Common myeloid progenitor, CD34-positive (primary cell): ENCODE measurements at regions of chr1 and their contacts with region 1.

Region 1: GRCh38 chr1:27719286-27720251 is 6.2 kb upstream of the FAM76A start:
- DNase-seq: peak; percentile 20 to 44 (median 36)
- H3K4me3 ChIP-seq: no peak overlapping the region
- H3K27ac ChIP-seq: no peak overlapping the region
- H3K4me1 ChIP-seq: no peaks in the 10 kb centered on the region
- H3K27me3 ChIP-seq: peaks cover 0 to 1% (median 0%) of the 10 kb centered on the region in 5 experiments

Region 2: GRCh38 chr1:27616441-27616840 is 103.1 kb before region 1 on chr1:
- CTCF ChIA-PET with region 1: no interaction called
- POLR2A ChIA-PET with region 1: no interaction called
- DNase-seq: peak in 1 of 3 donors; percentile 42
- H3K4me3 ChIP-seq: no peak overlapping the region
- H3K27ac ChIP-seq: no peak overlapping the region
- H3K4me1 ChIP-seq: peaks cover 5 to 46% (median 28%) of the 10 kb centered on the region in 4 experiments
- H3K27me3 ChIP-seq: no peaks in the 10 kb centered on the region

Region 3: DNA sequence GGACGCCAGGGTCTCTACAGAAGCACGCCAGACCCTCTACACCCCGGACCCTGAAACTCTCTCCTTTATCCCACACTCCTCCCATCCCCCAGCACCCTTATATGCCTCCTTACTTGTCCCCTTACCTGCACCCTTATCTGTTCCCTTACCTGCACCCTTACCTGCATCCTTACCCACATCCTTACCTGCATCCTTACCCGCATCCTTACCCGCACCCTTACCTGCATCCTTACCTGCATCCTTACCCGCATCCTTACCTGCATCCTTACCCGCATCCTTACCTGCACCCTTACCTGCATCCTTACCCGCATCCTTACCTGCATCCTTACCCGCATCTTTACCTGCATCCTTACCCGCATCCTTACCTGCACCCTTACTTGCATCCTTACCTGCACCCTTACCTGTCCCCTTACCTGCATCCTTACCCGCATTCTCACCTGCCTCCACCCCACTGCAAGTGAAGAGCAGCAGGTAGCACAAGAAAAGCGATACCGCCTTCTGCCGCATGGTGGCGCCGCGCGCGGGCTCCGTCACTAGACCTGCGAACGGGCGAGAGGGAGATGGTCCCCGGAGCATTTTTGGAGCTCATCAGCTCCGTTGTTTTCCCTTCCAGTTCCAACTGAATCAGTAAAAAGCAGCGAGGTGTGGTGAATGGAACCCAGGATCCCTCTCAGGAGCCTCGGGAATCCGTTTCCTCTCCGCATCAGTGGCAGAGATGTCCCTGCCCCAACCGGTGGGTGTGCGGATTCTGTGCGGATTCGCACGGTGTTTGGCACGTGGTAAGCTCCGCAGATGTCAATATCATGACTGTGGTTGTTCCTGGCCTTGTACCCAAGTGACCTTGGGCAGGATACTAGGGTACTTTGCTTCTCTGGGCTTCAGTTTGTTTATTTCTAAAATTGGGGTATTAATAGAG is 50.5 kb before region 1 on chr1:
- CTCF ChIA-PET with region 1: interaction called, 15 read pairs
- POLR2A ChIA-PET with region 1: no interaction called
- DNase-seq: peak; percentile 59 to 79 (median 77)
- H3K4me3 ChIP-seq: peak overlapping the region in 6 of 7 experiments; percentile 28 to 74 (median 58)
- H3K27ac ChIP-seq: no peak overlapping the region
- H3K4me1 ChIP-seq: peaks cover 7 to 35% (median 19%) of the 10 kb centered on the region in 4 experiments
- H3K27me3 ChIP-seq: no peaks in the 10 kb centered on the region

Region 4: GRCh38 chr1:27689423-27690173 is 30.0 kb before region 1 on chr1:
- CTCF ChIA-PET with region 1: no interaction called
- POLR2A ChIA-PET with region 1: no interaction called
- DNase-seq: no peak
- H3K4me3 ChIP-seq: no peak overlapping the region
- H3K27ac ChIP-seq: no peak overlapping the region
- H3K4me1 ChIP-seq: no peaks in the 10 kb centered on the region
- H3K27me3 ChIP-seq: no peaks in the 10 kb centered on the region

Region 5: GRCh38 chr1:27736252-27736651 is 16.7 kb after region 1 on chr1:
- CTCF ChIA-PET with region 1: no interaction called
- POLR2A ChIA-PET with region 1: no interaction called
- DNase-seq: no peak
- H3K4me3 ChIP-seq: no peak overlapping the region
- H3K27ac ChIP-seq: no peak overlapping the region
- H3K4me1 ChIP-seq: no peaks in the 10 kb centered on the region
- H3K27me3 ChIP-seq: no peaks in the 10 kb centered on the region